CD4-positive, alpha-beta T cell (primary cell): ENCODE measurements at regions of chr14 and their contacts with region 1.

Region 1: DNA sequence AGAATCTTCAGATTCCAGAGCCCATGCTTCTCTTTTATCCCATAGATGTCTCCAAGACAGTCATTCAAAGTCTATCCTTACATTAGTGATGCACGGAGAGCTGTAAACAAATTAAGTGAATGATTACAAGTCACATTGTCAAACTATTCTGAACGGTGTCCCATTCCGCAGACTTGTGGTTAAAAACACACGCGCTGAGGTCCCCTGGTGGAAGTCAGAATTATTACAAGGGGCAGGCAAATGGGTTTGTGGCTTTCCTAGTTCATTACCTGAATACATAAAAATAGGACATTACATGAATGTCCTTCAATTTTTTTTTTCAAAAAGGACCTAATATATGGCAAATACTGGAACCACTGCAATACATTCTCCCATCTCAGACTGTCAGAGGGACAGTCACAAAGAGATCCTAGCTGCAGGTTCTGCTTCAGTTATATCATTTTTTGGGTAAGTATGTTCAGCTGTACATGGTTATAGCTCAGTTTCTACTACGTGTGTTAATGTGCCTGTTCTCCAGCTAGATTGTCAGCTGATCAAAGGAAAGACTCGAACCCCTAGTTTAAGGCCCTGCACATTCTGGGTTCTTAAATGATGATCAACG is 53.1 kb upstream of the STON2 start:
- DNase-seq: peak in 13 of 14 experiments; percentile 19 to 73 (median 38)
- ATAC-seq: peak; percentile 76
- H3K4me3 ChIP-seq: no peak overlapping the region
- H3K4me3 Mint-ChIP-seq: no peak overlapping the region
- H3K27ac ChIP-seq: no peak overlapping the region
- H3K27ac Mint-ChIP-seq: no peak overlapping the region
- H3K4me1 ChIP-seq: peaks cover 3% of the 10 kb centered on the region
- H3K4me1 Mint-ChIP-seq: no peaks in the 10 kb centered on the region
- H3K27me3 ChIP-seq: peaks cover 0 to 6% of the 10 kb centered on the region in 2 experiments
- H3K27me3 Mint-ChIP-seq: peaks cover 12% of the 10 kb centered on the region
- CTCF ChIP-seq: peak; percentile 84

Region 2: DNA sequence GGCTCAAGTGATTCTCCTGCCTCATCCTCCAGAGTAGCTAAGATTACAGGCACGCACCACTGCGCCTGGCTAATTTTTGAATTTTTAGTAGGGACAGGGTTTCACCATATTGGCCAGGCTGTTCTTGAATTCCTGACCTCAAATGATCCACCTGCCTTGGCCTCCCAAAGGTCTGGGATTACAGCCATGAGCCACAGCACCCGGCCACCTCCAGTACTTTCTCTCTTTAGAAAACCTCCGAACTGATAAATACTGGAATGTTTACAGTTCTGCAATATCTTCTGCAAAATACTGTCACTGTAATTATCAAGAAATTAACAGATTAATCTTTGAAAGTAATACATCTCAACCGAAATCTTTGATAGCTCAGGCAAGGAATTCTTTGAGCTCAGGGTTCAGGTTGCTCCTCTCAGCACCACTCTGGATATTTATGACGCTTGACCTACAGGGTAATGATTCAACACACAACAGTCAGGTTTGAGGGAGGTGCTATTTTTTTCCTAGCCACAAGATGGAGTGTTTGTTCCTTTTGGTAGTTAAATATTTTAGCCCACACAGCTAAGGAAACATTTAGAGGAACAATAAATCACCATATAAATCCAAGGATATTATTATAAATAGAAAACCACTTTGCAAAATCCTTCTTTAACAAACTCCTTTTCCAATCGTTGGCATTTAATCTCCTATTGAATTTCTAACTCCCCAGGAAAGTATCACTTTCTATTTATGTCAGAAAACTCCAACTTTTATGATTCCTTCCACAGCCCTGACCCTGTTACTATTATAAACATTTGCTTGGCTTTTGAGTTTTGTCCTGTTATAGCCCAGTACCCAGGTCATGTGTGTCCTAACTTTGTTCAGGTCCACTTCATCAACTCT is 183.9 kb before region 1 on chr14:
- CTCF ChIA-PET with region 1: no interaction called
- POLR2A ChIA-PET with region 1: no interaction called
- intact Hi-C with region 1: loop called in 1 of 2 experiments (anchors 2 kb)
- DNase-seq: peak in 4 of 14 experiments; percentile 9 to 61 (median 55)
- ATAC-seq: peak; percentile 47
- H3K4me3 ChIP-seq: no peak overlapping the region
- H3K4me3 Mint-ChIP-seq: no peak overlapping the region
- H3K27ac ChIP-seq: no peak overlapping the region
- H3K27ac Mint-ChIP-seq: no peak overlapping the region
- H3K4me1 ChIP-seq: no peaks in the 10 kb centered on the region
- H3K4me1 Mint-ChIP-seq: peaks cover 27% of the 10 kb centered on the region
- H3K27me3 ChIP-seq: no peaks in the 10 kb centered on the region
- H3K27me3 Mint-ChIP-seq: peaks cover 7% of the 10 kb centered on the region
- CTCF ChIP-seq: peak; percentile 84

Region 3: DNA sequence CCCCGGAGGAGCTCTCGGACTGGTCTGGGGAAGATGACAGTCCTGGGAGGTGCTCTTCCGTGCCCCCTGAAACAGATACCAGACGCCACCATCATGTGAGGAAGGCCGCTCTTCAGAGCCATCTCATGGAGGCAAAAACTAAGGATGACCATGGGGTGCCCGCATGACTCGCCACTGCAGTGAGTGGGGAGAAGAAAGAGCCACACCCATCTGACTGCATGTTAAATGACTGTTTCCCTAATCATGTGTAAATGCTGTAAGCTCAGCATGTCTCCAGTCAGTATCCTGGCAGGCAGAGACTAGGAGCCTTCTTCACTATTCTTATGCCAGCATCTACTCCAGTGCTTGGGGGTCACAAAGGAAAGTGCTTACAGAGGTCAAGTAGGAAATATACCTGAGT is 57.2 kb before region 1 on chr14:
- CTCF ChIA-PET with region 1: no interaction called
- POLR2A ChIA-PET with region 1: no interaction called
- intact Hi-C with region 1: no loop called
- DNase-seq: peak in 1 of 14 experiments; percentile 33
- ATAC-seq: no peak
- H3K4me3 ChIP-seq: no peak overlapping the region
- H3K4me3 Mint-ChIP-seq: no peak overlapping the region
- H3K27ac ChIP-seq: no peak overlapping the region
- H3K27ac Mint-ChIP-seq: no peak overlapping the region
- H3K4me1 ChIP-seq: no peaks in the 10 kb centered on the region
- H3K4me1 Mint-ChIP-seq: no peaks in the 10 kb centered on the region
- H3K27me3 ChIP-seq: peaks cover 0 to 3% of the 10 kb centered on the region in 2 experiments
- H3K27me3 Mint-ChIP-seq: no peaks in the 10 kb centered on the region
- CTCF ChIP-seq: no peak

Region 4: GRCh38 chr14:81474148-81474492 is 20.9 kb after region 1 on chr14:
- CTCF ChIA-PET with region 1: no interaction called
- POLR2A ChIA-PET with region 1: no interaction called
- intact Hi-C with region 1: no loop called
- DNase-seq: peak in 3 of 14 experiments; percentile 23 to 60 (median 30)
- ATAC-seq: peak; percentile 54
- H3K4me3 ChIP-seq: peak overlapping the region; percentile 23
- H3K4me3 Mint-ChIP-seq: peak overlapping the region; percentile 72
- H3K27ac ChIP-seq: peak overlapping the region; percentile 26 to 65
- H3K27ac Mint-ChIP-seq: peak overlapping the region; percentile 86
- H3K4me1 ChIP-seq: peaks cover 2% of the 10 kb centered on the region
- H3K4me1 Mint-ChIP-seq: peaks cover 33% of the 10 kb centered on the region
- H3K27me3 ChIP-seq: no peaks in the 10 kb centered on the region
- H3K27me3 Mint-ChIP-seq: no peaks in the 10 kb centered on the region
- CTCF ChIP-seq: no peak